GM10248 (cell line): ENCODE measurements at regions of chr17 and their contacts with region 1.

Region 1: GRCh38 chr17:42312285-42313130 is 24.2 kb downstream of the STAT5A start:
- DNase-seq: peak; percentile 82
- CTCF ChIP-seq: peak; percentile 76

Region 2: DNA sequence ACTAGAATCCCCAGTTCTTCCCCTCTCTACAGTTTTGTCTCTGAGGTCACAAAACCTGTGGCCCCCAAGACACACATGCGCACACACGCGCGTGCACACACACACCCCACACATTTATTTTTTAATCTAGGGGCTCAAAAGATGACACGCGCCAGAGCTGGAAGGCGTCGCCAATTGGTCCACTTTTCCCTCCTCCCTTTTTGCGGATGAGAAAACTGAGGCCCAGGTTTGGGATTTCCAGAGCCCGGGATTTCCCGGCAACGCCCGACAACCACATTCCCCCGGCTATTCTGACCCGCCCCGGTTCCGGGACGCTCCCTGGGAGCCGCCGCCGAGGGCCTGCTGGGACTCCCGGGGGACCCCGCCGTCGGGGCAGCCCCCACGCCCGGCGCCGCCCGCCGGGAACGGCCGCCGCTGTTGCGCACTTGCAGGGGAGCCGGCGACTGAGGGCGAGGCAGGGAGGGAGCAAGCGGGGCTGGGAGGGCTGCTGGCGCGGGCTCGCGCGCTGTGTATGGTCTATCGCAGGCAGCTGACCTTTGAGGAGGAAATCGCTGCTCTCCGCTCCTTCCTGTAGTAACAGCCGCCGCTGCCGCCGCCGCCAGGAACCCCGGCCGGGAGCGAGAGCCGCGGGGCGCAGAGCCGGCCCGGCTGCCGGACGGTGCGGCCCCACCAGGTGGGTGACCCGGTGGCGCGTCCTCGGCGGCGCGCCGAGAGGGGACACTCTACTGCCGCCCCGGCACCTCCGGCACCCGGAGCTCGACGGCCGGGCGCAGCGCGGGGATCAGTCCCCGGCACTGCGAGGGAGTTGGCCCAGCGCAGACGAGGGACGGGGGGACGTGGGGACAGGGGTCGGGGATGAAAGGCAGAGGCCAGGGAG is 24.3 kb before region 1 on chr17 and contains the start of gene STAT5A:
- CTCF ChIA-PET with region 1: interaction called, 15 read pairs
- POLR2A ChIA-PET with region 1: no interaction called
- DNase-seq: peak; percentile 86
- CTCF ChIP-seq: no peak

Region 3: DNA sequence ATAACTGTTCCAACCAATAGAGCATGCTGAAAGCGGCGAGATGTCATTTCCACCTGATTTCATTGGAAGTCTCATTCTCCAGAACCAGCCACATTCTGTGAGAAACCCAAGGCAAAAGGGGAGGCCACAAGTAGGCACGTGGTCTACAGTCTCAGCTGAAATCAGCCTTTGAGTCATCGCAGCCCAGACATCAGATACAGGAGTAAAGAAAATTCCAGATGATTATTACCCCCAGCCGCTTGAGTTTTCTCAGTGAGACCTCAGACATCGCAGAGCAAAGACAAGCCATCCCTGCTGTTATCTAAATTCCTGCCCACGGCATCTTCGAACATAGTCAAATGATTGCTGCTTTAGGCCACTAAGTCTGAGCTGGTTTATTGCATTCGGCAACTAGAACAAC is 52.6 kb after region 1 on chr17:
- CTCF ChIA-PET with region 1: no interaction called
- POLR2A ChIA-PET with region 1: no interaction called
- DNase-seq: no peak
- CTCF ChIP-seq: no peak